ENCODE measurements at regions of chr3 and their contacts with region 1.

Region 1: DNA sequence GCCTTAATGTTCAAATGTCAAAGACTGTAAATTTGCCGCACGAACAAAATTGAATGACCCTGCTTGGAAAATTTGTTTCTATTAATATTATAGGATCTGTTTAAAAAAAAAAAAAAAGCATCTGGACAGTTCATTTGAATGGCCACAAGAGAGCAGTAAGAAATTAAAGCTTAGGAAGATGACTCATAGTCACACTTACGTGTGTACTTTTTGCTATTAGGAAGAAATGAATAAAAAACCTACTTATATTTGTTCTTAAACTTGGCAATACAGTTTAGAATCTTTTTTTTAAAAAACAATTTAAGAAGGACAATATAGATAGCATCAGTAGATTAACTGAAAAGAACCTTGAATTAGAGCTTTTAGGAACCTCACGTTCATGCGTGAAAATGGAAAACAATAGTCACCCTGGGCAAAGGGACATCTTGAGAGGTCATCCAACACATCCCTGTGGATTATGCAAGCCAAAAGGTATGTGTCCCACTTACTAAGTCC is 621.8 kb downstream of the MECOM start:
- DNase-seq: peak in 1 of 5 donors; percentile 28
- H3K4me3 ChIP-seq: peak overlapping the region in 1 of 3 donors; percentile 14
- H3K27ac ChIP-seq: no peak overlapping the region
- H3K4me1 ChIP-seq: no peaks in the 10 kb centered on the region
- H3K27me3 ChIP-seq: no peaks in the 10 kb centered on the region
- CTCF ChIP-seq: peak; percentile 35

Region 2: DNA sequence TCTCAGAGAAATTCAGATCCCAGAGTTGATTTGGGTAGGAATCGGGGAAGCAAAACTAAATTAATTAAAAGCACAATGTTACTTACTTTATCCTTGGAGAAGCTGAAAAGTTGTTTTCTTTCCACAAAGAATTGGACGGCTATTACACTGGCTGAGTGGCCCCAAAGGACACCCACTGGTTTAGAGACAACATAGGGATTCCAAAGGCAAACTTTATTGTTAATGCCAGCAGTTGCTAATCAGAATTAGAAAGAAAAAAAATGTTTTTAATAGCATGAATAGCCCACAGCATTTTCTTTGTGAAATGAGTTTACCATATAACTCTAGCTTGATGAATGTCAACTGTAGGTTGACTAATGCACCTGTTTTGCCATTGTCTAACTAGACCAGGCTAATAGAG is 1439.7 kb before region 1 on chr3:
- intact Hi-C with region 1: no loop called
- DNase-seq: no peak
- H3K4me3 ChIP-seq: no peak overlapping the region
- H3K27ac ChIP-seq: no peak overlapping the region
- H3K4me1 ChIP-seq: no peaks in the 10 kb centered on the region
- H3K27me3 ChIP-seq: no peaks in the 10 kb centered on the region
- CTCF ChIP-seq: no peak

Region 3: DNA sequence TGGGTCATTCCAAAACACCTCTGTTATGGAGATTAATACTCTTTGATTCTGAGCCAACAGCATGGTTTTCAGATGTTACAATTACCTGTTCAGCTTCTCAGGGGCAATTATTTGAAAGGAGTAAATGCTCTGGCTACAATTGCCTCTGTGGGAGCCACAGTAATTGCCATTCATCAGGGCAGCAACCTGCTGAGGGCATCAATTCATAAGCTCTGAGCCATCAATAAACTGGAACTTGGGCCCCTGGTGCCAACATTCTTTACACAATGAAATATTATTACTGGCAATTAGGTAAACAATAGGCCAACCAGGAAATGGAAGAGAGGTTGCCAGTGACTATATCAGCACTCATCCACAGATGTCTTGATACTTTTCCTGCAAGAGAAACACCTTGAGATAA is 39.0 kb before region 1 on chr3:
- intact Hi-C with region 1: no loop called
- DNase-seq: no peak
- H3K4me3 ChIP-seq: no peak overlapping the region
- H3K27ac ChIP-seq: no peak overlapping the region
- H3K4me1 ChIP-seq: no peaks in the 10 kb centered on the region
- H3K27me3 ChIP-seq: no peaks in the 10 kb centered on the region
- CTCF ChIP-seq: no peak

Region 4: GRCh38 chr3:169676925-169677537 is 635.3 kb after region 1 on chr3:
- intact Hi-C with region 1: loop called (anchors 10 kb)
- DNase-seq: no peak
- H3K4me3 ChIP-seq: no peak overlapping the region
- H3K27ac ChIP-seq: no peak overlapping the region
- H3K4me1 ChIP-seq: no peaks in the 10 kb centered on the region
- H3K27me3 ChIP-seq: no peaks in the 10 kb centered on the region
- CTCF ChIP-seq: no peak